Heart left ventricle (tissue), 16 donors: ENCODE measurements at regions of chr7 and their contacts with region 1.

Region 1: GRCh38 chr7:5997222-5997808 is 11.5 kb downstream of the PMS2 start:
- DNase-seq: peak in 4 of 5 donors; percentile 24 to 45 (median 35)
- ATAC-seq: peak in 3 of 4 donors; percentile 70 to 76 (median 71)
- H3K4me3 ChIP-seq: no peak overlapping the region
- H3K27ac ChIP-seq: no peak overlapping the region
- H3K4me1 ChIP-seq: peaks cover 0 to 3% (median 0%) of the 10 kb centered on the region in 12 donors
- H3K27me3 ChIP-seq: no peaks in the 10 kb centered on the region
- CTCF ChIP-seq: peak; percentile 31 to 79 (median 66)
- POLR2A ChIP-seq: no peak

Region 2: GRCh38 chr7:6338551-6339274 is 341.4 kb after region 1 on chr7:
- intact Hi-C with region 1: loop called in 1 of 10 experiments (anchors 5 kb)
- DNase-seq: peak in 4 of 5 donors; percentile 41 to 66 (median 57)
- ATAC-seq: peak; percentile 94 to 97 (median 94)
- H3K4me3 ChIP-seq: peak overlapping the region in 3 of 12 donors; percentile 5 to 19 (median 10)
- H3K27ac ChIP-seq: peak overlapping the region; percentile 62 to 86 (median 78)
- H3K4me1 ChIP-seq: peaks cover 0 to 21% (median 6%) of the 10 kb centered on the region in 12 donors
- H3K27me3 ChIP-seq: no peaks in the 10 kb centered on the region
- CTCF ChIP-seq: no peak
- POLR2A ChIP-seq: peak in 1 of 2 donors; percentile 21